T-cell (primary cell): ENCODE measurements at regions of chr6 and their contacts with region 1.

Region 1: DNA sequence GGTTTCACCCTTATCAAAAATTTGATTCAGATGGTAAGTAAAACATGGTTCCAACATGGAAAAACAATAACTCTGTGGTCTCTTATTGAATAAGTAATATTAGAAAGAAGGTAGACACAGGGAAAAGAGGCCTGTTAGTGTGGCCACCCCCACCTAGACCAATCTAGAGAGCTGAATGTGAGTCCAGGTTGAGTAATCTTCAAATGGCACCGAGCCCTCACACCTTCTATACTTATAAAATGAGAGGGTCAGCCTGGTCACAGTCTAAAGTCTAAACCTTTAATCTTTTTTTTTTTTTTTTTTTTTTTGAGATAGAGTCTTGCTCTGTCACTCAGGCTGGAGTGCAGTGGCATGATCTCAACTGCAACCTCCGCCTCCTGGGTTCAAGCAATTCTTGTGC is 6.9 kb downstream of the FAM184A start:
- DNase-seq: no peak
- ATAC-seq: no peak
- H3K4me3 ChIP-seq: no peak overlapping the region
- H3K4me3 Mint-ChIP-seq: no peak overlapping the region
- H3K27ac ChIP-seq: no peak overlapping the region
- H3K27ac Mint-ChIP-seq: no peak overlapping the region
- H3K4me1 ChIP-seq: peaks cover 6 to 8% of the 10 kb centered on the region in 2 experiments
- H3K4me1 Mint-ChIP-seq: peaks cover 27 to 32% (median 29%) of the 10 kb centered on the region in 3 donors
- H3K27me3 ChIP-seq: no peaks in the 10 kb centered on the region
- H3K27me3 Mint-ChIP-seq: no peaks in the 10 kb centered on the region

Region 2: DNA sequence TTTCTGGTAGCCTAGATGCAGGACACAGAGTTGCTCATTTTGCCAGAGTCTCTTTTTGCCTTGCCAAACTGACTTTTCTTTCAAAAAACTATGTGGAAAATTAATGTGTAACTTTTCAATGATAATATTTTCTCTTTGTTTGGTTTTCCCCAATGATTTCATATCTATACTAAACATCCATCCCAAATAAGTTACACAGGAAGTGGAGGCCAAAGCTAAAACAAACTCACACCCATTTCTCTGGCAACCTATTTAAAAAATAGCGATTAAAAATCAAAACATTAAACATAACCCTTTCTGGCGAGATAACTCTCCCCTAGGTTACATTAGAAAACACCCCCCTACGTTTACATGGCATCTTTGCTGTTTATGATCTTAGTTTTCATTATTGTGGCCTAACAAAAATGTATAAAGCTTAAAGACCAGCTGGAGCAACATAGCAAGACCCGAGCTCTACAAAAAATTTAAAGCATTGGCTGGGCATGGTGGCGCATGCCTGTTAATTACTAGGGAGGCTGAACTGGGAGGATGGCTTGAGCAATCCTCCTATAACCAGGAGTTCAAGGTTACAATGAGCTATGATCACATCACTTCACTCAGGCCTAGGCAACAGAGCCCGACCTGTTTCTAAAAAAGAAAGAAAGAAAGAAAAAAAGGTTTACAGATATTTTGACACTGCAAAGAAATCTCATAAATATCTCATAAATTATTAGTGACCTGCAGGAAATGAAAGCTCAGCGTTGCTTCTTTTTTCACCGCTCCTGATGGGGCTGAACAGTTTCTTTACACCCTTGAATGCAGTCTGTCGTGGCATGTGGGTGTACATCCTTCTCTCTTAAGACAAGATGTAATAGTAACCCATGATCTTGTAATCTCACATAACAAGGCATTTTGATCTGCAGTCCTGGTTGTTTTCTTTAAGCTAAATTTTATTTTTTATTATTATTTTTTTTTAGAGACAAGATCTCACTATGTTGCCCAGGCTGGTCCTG is 387.4 kb before region 1 on chr6:
- CTCF ChIA-PET with region 1: no interaction called
- POLR2A ChIA-PET with region 1: interaction called in 1 of 2 experiments, 12 read pairs
- DNase-seq: no peak
- ATAC-seq: peak in 1 of 4 experiments; percentile 28
- H3K4me3 ChIP-seq: no peak overlapping the region
- H3K4me3 Mint-ChIP-seq: peak overlapping the region in 2 of 3 donors; percentile 10 to 47
- H3K27ac ChIP-seq: peak overlapping the region; percentile 42
- H3K27ac Mint-ChIP-seq: peak overlapping the region; percentile 56 to 61
- H3K4me1 ChIP-seq: peaks cover 22% of the 10 kb centered on the region in 2 experiments
- H3K4me1 Mint-ChIP-seq: peaks cover 73 to 83% (median 74%) of the 10 kb centered on the region in 3 donors
- H3K27me3 ChIP-seq: no peaks in the 10 kb centered on the region
- H3K27me3 Mint-ChIP-seq: no peaks in the 10 kb centered on the region

Region 3: DNA sequence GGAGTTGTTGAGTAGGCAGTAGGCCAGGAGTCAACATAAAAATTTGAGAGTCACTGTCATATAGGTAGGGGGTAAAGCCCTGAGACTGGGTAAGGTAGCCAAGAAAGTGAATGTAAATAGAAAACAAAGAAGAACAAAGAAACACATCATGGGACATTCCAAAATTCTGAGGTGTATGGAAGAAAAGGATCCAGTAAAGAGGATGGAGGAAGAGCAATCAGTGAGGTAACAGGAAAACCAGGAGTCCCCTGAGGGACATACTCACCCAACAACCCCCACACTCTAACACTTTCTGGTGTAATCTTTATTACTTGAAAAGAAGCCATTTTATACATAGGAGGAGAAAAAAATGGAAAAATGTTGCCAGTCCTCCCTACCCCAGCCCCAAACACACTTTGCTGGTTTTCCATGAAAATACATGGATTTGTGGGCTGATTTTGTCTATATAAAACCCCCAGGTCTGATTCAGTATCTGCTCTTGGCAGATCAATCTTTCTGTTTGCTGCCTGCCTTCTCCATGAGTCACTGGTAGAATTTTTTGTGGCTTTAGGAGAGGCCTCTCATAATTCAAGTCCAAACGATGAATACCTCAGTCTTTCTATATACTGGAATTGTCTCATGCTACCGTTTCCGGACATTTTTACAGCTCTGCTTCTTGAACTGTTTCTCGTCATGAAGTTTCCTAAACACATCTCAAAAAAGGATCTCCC is 549.4 kb after region 1 on chr6:
- CTCF ChIA-PET with region 1: no interaction called
- POLR2A ChIA-PET with region 1: no interaction called
- DNase-seq: no peak
- ATAC-seq: no peak
- H3K4me3 ChIP-seq: no peak overlapping the region
- H3K4me3 Mint-ChIP-seq: no peak overlapping the region
- H3K27ac ChIP-seq: no peak overlapping the region
- H3K27ac Mint-ChIP-seq: no peak overlapping the region
- H3K4me1 ChIP-seq: no peaks in the 10 kb centered on the region
- H3K4me1 Mint-ChIP-seq: no peaks in the 10 kb centered on the region
- H3K27me3 ChIP-seq: no peaks in the 10 kb centered on the region
- H3K27me3 Mint-ChIP-seq: peaks cover 3% of the 10 kb centered on the region in 2 donors